ENCODE measurements at regions of chr2 and their contacts with region 1.

Region 1: DNA sequence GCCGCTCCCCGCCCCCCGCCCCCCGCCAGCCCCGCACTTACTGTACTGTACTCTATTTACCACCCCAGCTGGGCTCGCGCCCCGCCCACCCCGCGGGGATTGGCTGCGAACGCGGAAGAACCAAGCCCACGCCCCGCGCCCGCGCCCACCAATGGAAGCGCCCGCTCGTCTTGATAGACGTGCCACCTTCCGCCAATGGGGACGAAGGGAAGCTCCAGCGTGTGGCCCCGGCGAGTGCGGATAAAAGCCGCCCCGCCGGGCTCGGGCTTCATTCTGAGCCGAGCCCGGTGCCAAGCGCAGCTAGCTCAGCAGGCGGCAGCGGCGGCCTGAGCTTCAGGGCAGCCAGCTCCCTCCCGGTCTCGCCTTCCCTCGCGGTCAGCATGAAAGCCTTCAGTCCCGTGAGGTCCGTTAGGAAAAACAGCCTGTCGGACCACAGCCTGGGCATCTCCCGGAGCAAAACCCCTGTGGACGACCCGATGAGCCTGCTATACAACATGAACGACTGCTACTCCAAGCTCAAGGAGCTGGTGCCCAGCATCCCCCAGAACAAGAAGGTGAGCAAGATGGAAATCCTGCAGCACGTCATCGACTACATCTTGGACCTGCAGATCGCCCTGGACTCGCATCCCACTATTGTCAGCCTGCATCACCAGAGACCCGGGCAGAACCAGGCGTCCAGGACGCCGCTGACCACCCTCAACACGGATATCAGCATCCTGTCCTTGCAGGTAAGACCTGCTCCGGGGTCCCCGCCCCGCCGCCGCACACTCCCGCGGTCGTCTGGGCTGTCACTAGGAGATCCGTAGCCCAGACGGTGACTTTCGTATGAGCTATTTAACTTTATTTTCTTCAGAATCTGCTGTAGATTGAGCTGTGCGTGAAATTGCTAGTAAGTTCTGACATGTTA is at the start of gene ID2:
- DNase-seq: peak; percentile 96 to 99 (median 99)
- ATAC-seq: peak; percentile 83
- H3K4me3 ChIP-seq: peak within 1 kb of the TSS; percentile 89
- H3K4me3 Mint-ChIP-seq: peak within 1 kb of the TSS; percentile 89 to 100 (median 98)
- H3K27ac ChIP-seq: peak within 1 kb of the TSS; percentile 81
- H3K27ac Mint-ChIP-seq: peak within 1 kb of the TSS; percentile 89 to 97 (median 95)
- H3K4me1 ChIP-seq: peaks cover 10 to 24% of the 10 kb centered on the region in 2 donors
- H3K4me1 Mint-ChIP-seq: peaks cover 24 to 49% (median 43%) of the 10 kb centered on the region in 7 donors
- H3K27me3 ChIP-seq: peaks cover 0 to 18% of the 10 kb centered on the region in 2 donors
- H3K27me3 Mint-ChIP-seq: peaks cover 12 to 24% (median 20%) of the 10 kb centered on the region in 5 donors
- total RNA-seq, gene ID2: 43.0 to 185 (median 77.1) TPM

Region 2: GRCh38 chr2:6909431-6910385 is 1772.3 kb before region 1 on chr2:
- CTCF ChIA-PET with region 1: no interaction called
- POLR2A ChIA-PET with region 1: interaction called, 5 read pairs
- intact Hi-C with region 1: loop called (anchors 5 kb)
- DNase-seq: peak in 7 of 9 donors; percentile 70 to 84 (median 80)
- ATAC-seq: peak; percentile 84
- H3K4me3 ChIP-seq: peak overlapping the region; percentile 17
- H3K4me3 Mint-ChIP-seq: peak overlapping the region; percentile 68 to 85 (median 80)
- H3K27ac ChIP-seq: peak overlapping the region; percentile 85
- H3K27ac Mint-ChIP-seq: peak overlapping the region; percentile 85 to 99 (median 92)
- H3K4me1 ChIP-seq: peaks cover 58 to 94% of the 10 kb centered on the region in 2 donors
- H3K4me1 Mint-ChIP-seq: peaks cover 61 to 97% (median 93%) of the 10 kb centered on the region in 7 donors
- H3K27me3 ChIP-seq: no peaks in the 10 kb centered on the region
- H3K27me3 Mint-ChIP-seq: peaks cover 0 to 12% (median 0%) of the 10 kb centered on the region in 5 donors

Region 3: GRCh38 chr2:7427293-7428060 is 1254.6 kb before region 1 on chr2:
- CTCF ChIA-PET with region 1: interaction called, 40 read pairs
- POLR2A ChIA-PET with region 1: interaction called, 31 read pairs
- intact Hi-C with region 1: loop called (anchors 1 kb)
- DNase-seq: peak in 7 of 9 donors; percentile 37 to 73 (median 63)
- ATAC-seq: peak; percentile 70
- H3K4me3 ChIP-seq: no peak overlapping the region
- H3K4me3 Mint-ChIP-seq: peak overlapping the region in 6 of 10 donors; percentile 0 to 87 (median 38)
- H3K27ac ChIP-seq: no peak overlapping the region
- H3K27ac Mint-ChIP-seq: peak overlapping the region in 7 of 9 donors; percentile 3 to 98 (median 78)
- H3K4me1 ChIP-seq: peaks cover 0 to 29% of the 10 kb centered on the region in 2 donors
- H3K4me1 Mint-ChIP-seq: peaks cover 26 to 49% (median 46%) of the 10 kb centered on the region in 7 donors
- H3K27me3 ChIP-seq: no peaks in the 10 kb centered on the region
- H3K27me3 Mint-ChIP-seq: peaks cover 0 to 6% (median 3%) of the 10 kb centered on the region in 5 donors

Region 4: DNA sequence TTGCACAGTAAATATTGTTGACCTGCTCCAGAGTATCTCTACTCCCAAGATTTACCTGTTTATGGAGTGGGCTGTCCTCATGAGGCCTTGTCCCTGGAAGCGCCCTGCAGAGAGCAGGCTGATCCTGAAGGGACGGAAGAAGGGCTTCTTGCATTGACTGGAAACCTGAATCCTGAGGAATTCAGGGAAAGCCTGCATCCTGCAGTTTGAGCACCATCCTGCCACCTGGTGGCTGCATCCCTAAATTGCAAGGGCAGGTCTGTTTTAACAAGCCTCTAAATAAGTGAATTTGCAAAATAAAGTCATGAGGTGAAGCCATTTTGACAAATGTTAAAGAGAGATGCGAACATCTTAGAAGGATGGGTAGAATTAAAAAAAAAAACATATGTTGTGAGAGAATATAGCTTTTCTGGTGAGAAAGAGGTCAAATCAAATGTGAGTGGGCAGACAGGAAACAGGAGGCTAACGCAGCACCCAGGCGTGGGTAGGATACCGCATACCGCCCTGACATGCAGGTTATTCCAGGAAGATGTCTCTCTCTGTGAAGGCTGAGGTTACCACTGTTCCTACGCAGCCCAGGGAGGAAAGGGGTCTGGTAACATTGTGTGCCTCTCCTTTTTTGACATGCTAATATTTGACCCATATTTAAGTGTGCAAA is 1009.9 kb before region 1 on chr2:
- CTCF ChIA-PET with region 1: interaction called, 3 read pairs
- POLR2A ChIA-PET with region 1: interaction called, 5 read pairs
- intact Hi-C with region 1: loop called (anchors 1 kb)
- DNase-seq: peak in 8 of 9 donors; percentile 17 to 69 (median 47)
- ATAC-seq: peak; percentile 61
- H3K4me3 ChIP-seq: no peak overlapping the region
- H3K4me3 Mint-ChIP-seq: peak overlapping the region; percentile 16 to 84 (median 69)
- H3K27ac ChIP-seq: no peak overlapping the region
- H3K27ac Mint-ChIP-seq: peak overlapping the region; percentile 77 to 91 (median 87)
- H3K4me1 ChIP-seq: peaks cover 9 to 19% of the 10 kb centered on the region in 2 donors
- H3K4me1 Mint-ChIP-seq: peaks cover 24 to 59% (median 40%) of the 10 kb centered on the region in 7 donors
- H3K27me3 ChIP-seq: no peaks in the 10 kb centered on the region
- H3K27me3 Mint-ChIP-seq: no peaks in the 10 kb centered on the region

Region 5: DNA sequence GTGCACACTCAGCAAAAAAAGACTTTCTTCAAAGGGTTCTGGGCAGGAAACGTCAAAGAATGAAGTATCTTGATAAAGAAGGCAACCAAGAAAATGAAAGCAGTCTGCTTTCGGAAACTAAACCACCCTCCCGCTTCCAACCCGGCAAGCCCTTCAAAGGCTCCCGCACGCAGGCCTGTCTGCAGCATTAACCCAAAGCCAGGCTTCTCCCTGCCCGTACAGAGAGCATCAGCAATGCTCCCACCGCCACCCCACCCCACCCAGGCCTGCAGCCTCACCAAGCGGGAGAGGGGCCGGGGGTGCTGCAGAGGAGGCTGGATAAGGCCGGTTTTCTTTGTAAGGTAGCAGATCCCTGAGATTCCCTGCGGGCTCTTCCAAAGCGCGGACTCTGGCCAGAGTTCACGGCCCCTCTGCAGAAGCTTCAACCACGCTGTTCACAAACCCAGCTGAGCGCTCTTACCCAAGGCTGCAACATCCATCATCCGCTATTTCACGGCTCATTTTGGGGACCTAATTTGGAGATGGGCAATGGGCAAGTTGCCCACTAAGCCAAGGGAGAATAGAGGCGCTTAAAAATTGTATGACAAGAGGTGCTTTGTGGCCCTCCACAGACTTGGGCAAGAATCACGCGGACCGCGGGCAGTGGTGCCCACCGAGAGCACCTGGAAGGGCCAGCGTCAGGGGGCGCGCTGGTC is 225.7 kb before region 1 on chr2:
- CTCF ChIA-PET with region 1: no interaction called
- POLR2A ChIA-PET with region 1: no interaction called
- intact Hi-C with region 1: loop called (anchors 1 to 2 kb)
- DNase-seq: peak in 8 of 9 donors; percentile 44 to 71 (median 58)
- ATAC-seq: peak; percentile 75
- H3K4me3 ChIP-seq: peak overlapping the region; percentile 60
- H3K4me3 Mint-ChIP-seq: peak overlapping the region; percentile 68 to 88 (median 84)
- H3K27ac ChIP-seq: no peak overlapping the region
- H3K27ac Mint-ChIP-seq: peak overlapping the region in 8 of 9 donors; percentile 2 to 94 (median 54)
- H3K4me1 ChIP-seq: peaks cover 11 to 21% of the 10 kb centered on the region in 2 donors
- H3K4me1 Mint-ChIP-seq: peaks cover 13 to 45% (median 25%) of the 10 kb centered on the region in 7 donors
- H3K27me3 ChIP-seq: no peaks in the 10 kb centered on the region
- H3K27me3 Mint-ChIP-seq: peaks cover 0 to 17% (median 6%) of the 10 kb centered on the region in 5 donors

Region 6: GRCh38 chr2:8586457-8587051 is 95.5 kb before region 1 on chr2:
- CTCF ChIA-PET with region 1: no interaction called
- POLR2A ChIA-PET with region 1: no interaction called
- intact Hi-C with region 1: loop called in 1 of 2 experiments (anchors 5 kb)
- DNase-seq: no peak
- ATAC-seq: no peak
- H3K4me3 ChIP-seq: no peak overlapping the region
- H3K4me3 Mint-ChIP-seq: peak overlapping the region in 1 of 10 donors; percentile 21
- H3K27ac ChIP-seq: no peak overlapping the region
- H3K27ac Mint-ChIP-seq: peak overlapping the region in 1 of 9 donors; percentile 49
- H3K4me1 ChIP-seq: peaks cover 0 to 12% of the 10 kb centered on the region in 2 donors
- H3K4me1 Mint-ChIP-seq: peaks cover 8 to 25% (median 11%) of the 10 kb centered on the region in 7 donors
- H3K27me3 ChIP-seq: no peaks in the 10 kb centered on the region
- H3K27me3 Mint-ChIP-seq: peaks cover 0 to 25% (median 7%) of the 10 kb centered on the region in 5 donors

Region 7: GRCh38 chr2:9003616-9004337 is 321.7 kb after region 1 on chr2 and contains the start of gene MBOAT2:
- CTCF ChIA-PET with region 1: no interaction called
- POLR2A ChIA-PET with region 1: no interaction called
- intact Hi-C with region 1: loop called in 1 of 2 experiments (anchors 5 kb)
- DNase-seq: peak; percentile 60 to 84 (median 71)
- ATAC-seq: peak; percentile 92
- H3K4me3 ChIP-seq: peak within 1 kb of the TSS; percentile 60
- H3K4me3 Mint-ChIP-seq: peak within 1 kb of the TSS; percentile 77 to 92 (median 86)
- H3K27ac ChIP-seq: peak within 1 kb of the TSS; percentile 62
- H3K27ac Mint-ChIP-seq: peak within 1 kb of the TSS in 8 of 9 donors; percentile 56 to 86 (median 76)
- H3K4me1 ChIP-seq: peaks cover 0 to 3% of the 10 kb centered on the region in 2 donors
- H3K4me1 Mint-ChIP-seq: peaks cover 13 to 25% (median 22%) of the 10 kb centered on the region in 7 donors
- H3K27me3 ChIP-seq: peaks cover 0 to 3% of the 10 kb centered on the region in 2 donors
- H3K27me3 Mint-ChIP-seq: peaks cover 0 to 18% (median 4%) of the 10 kb centered on the region in 5 donors
- total RNA-seq, gene MBOAT2: 1.4 to 6.0 (median 2.3) TPM